ENCODE measurements at regions of chr4 and their contacts with region 1.

Region 1: GRCh38 chr4:173013232-173013930 is 155.2 kb upstream of the GALNT7 start:
- DNase-seq: peak in 1 of 2 experiments; percentile 58
- H3K4me3 ChIP-seq: no peak overlapping the region
- H3K4me3 Mint-ChIP-seq: no peak overlapping the region
- H3K27ac Mint-ChIP-seq: no peak overlapping the region
- H3K4me1 ChIP-seq: no peaks in the 10 kb centered on the region
- H3K4me1 Mint-ChIP-seq: no peaks in the 10 kb centered on the region
- H3K27me3 ChIP-seq: no peaks in the 10 kb centered on the region
- H3K27me3 Mint-ChIP-seq: peaks cover 2% of the 10 kb centered on the region
- CTCF ChIP-seq: peak; percentile 62 to 69

Region 2: DNA sequence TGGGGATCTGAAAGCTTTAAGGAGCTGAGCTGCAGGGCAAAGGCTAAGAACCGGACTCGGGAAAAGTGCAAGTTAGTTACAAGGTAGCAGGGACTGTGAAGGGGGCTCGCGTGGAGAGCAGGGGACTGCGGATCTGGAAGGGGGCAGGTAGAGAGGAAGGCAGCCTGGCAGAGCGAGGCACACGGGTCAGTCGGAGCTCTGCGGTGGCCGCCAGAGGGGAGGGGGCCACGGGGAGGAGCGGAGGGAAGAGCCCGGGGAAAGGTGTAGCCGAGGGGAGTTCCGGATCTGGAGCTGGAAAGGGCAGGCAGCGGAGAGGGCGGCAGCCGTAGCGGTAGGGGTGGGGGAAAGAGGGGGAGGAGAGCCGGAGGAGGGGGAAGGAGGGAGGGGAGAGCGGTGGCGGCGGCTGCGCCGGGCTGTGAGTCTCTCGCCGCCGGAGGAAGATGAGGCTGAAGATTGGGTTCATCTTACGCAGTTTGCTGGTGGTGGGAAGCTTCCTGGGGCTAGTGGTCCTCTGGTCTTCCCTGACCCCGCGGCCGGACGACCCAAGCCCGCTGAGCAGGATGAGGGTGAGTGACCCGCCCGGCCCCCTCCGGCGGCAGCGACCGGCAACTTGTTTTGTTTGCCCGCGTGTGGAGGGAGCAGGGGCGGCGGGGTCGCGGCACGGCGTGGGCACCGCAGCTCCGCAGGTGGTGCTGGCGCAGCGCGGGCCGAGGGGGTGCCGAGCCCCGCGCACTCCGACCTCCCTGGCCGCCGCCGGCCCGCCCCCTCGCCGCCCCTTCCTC is 155.2 kb after region 1 on chr4 and contains the start of gene GALNT7:
- CTCF ChIA-PET with region 1: interaction called, 9 read pairs
- POLR2A ChIA-PET with region 1: no interaction called
- intact Hi-C with region 1: loop called (anchors 5 kb)
- DNase-seq: peak; percentile 80 to 83
- H3K4me3 ChIP-seq: peak within 1 kb of the TSS; percentile 58
- H3K4me3 Mint-ChIP-seq: peak within 1 kb of the TSS; percentile 90
- H3K27ac Mint-ChIP-seq: peak within 1 kb of the TSS; percentile 85
- H3K4me1 ChIP-seq: peaks cover 8% of the 10 kb centered on the region; the same call in 1 of the 2 replicates
- H3K4me1 Mint-ChIP-seq: no peaks in the 10 kb centered on the region
- H3K27me3 ChIP-seq: no peaks in the 10 kb centered on the region
- H3K27me3 Mint-ChIP-seq: no peaks in the 10 kb centered on the region
- CTCF ChIP-seq: no peak
- total RNA-seq, gene GALNT7: 16.8 and 17.4 TPM in 2 replicates

Region 3: GRCh38 chr4:173257732-173258717 is 244.6 kb after region 1 on chr4:
- CTCF ChIA-PET with region 1: interaction called, 25 read pairs
- POLR2A ChIA-PET with region 1: no interaction called
- intact Hi-C with region 1: loop called (anchors 1 kb)
- DNase-seq: peak; percentile 53 to 60
- H3K4me3 ChIP-seq: no peak overlapping the region
- H3K4me3 Mint-ChIP-seq: no peak overlapping the region
- H3K27ac Mint-ChIP-seq: no peak overlapping the region
- H3K4me1 ChIP-seq: no peaks in the 10 kb centered on the region
- H3K4me1 Mint-ChIP-seq: no peaks in the 10 kb centered on the region
- H3K27me3 ChIP-seq: no peaks in the 10 kb centered on the region
- H3K27me3 Mint-ChIP-seq: no peaks in the 10 kb centered on the region
- CTCF ChIP-seq: peak; percentile 68 to 72

Region 4: GRCh38 chr4:173301518-173302201 is 288.3 kb after region 1 on chr4:
- CTCF ChIA-PET with region 1: interaction called, 27 read pairs
- POLR2A ChIA-PET with region 1: interaction called, 11 read pairs
- intact Hi-C with region 1: loop called (anchors 5 kb)
- DNase-seq: no peak
- H3K4me3 ChIP-seq: no peak overlapping the region
- H3K4me3 Mint-ChIP-seq: no peak overlapping the region
- H3K27ac Mint-ChIP-seq: no peak overlapping the region
- H3K4me1 ChIP-seq: no peaks in the 10 kb centered on the region
- H3K4me1 Mint-ChIP-seq: no peaks in the 10 kb centered on the region
- H3K27me3 ChIP-seq: no peaks in the 10 kb centered on the region
- H3K27me3 Mint-ChIP-seq: no peaks in the 10 kb centered on the region
- CTCF ChIP-seq: peak; percentile 35 to 50

Region 5: GRCh38 chr4:173420324-173420752 is 407.0 kb after region 1 on chr4:
- CTCF ChIA-PET with region 1: no interaction called
- POLR2A ChIA-PET with region 1: no interaction called
- intact Hi-C with region 1: loop called (anchors 2 kb)
- DNase-seq: no peak
- H3K4me3 ChIP-seq: no peak overlapping the region
- H3K4me3 Mint-ChIP-seq: no peak overlapping the region
- H3K27ac Mint-ChIP-seq: no peak overlapping the region
- H3K4me1 ChIP-seq: no peaks in the 10 kb centered on the region
- H3K4me1 Mint-ChIP-seq: peaks cover 5% of the 10 kb centered on the region
- H3K27me3 ChIP-seq: no peaks in the 10 kb centered on the region
- H3K27me3 Mint-ChIP-seq: no peaks in the 10 kb centered on the region
- CTCF ChIP-seq: peak; percentile 33 to 38

Region 6: GRCh38 chr4:173494013-173494970 is 480.9 kb after region 1 on chr4:
- CTCF ChIA-PET with region 1: interaction called, 3 read pairs
- POLR2A ChIA-PET with region 1: no interaction called
- intact Hi-C with region 1: loop called (anchors 10 kb)
- DNase-seq: peak; percentile 68
- H3K4me3 ChIP-seq: peak overlapping the region; percentile 33
- H3K4me3 Mint-ChIP-seq: peak overlapping the region; percentile 69
- H3K27ac Mint-ChIP-seq: no peak overlapping the region
- H3K4me1 ChIP-seq: peaks cover 9% of the 10 kb centered on the region; the same call in 1 of the 2 replicates
- H3K4me1 Mint-ChIP-seq: peaks cover 8% of the 10 kb centered on the region
- H3K27me3 ChIP-seq: no peaks in the 10 kb centered on the region; the same call in 1 of the 2 replicates
- H3K27me3 Mint-ChIP-seq: no peaks in the 10 kb centered on the region
- CTCF ChIP-seq: peak; percentile 65 to 89